Activated CD8-positive, alpha-beta T cell treated with anti-CD3 and anti-CD28 coated beads for 36 hours (primary cell): ENCODE measurements at regions of chr18 and their contacts with region 1.

Region 1: DNA sequence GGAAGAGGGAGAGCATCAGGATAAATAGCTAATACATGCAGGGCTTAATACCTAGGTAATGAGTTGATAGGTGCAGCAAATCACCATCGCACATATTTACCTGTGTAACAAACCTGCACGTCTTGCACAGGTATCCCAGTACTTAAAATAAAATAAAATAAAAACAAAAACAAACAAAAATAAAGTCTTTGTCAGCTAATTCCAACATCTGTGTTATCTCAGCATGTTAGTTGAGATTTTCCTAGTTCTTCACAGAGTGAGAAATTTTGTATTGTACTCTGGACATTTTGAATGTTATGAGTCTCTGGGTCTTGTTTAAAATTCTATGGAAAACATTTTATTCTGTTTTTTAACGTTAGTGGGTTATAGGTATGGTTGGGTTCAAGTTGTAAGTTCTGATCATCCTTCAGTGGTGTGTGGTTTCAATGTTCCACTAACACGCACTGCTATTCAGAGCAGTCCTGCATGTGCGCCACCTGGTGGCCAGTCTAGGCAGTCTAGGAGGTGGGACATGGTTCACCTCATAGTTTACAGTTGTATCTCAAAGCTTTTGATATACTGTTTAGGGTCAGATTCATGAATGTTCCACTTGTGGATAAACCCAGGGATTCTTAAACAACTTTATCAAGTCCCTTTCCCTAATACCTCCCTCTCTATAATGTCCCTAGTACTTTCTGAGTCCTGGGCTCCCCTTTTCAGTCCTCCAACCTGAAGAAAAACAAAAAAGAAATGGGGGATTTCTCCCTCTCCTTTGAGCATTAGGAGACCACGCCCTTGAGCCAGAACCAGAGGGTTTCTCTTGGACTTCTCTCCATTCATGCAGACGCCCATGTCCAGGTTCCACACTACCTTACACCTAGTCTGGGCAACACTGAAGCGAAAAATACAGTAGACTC is 213.4 kb upstream of the GATA6 start:
- DNase-seq: peak; percentile 84
- ATAC-seq: peak; percentile 84
- H3K4me3 Mint-ChIP-seq: no peak overlapping the region
- H3K27ac Mint-ChIP-seq: no peak overlapping the region
- H3K4me1 Mint-ChIP-seq: no peaks in the 10 kb centered on the region
- H3K27me3 Mint-ChIP-seq: peaks cover 12% of the 10 kb centered on the region
- CTCF ChIP-seq: peak; percentile 93

Region 2: DNA sequence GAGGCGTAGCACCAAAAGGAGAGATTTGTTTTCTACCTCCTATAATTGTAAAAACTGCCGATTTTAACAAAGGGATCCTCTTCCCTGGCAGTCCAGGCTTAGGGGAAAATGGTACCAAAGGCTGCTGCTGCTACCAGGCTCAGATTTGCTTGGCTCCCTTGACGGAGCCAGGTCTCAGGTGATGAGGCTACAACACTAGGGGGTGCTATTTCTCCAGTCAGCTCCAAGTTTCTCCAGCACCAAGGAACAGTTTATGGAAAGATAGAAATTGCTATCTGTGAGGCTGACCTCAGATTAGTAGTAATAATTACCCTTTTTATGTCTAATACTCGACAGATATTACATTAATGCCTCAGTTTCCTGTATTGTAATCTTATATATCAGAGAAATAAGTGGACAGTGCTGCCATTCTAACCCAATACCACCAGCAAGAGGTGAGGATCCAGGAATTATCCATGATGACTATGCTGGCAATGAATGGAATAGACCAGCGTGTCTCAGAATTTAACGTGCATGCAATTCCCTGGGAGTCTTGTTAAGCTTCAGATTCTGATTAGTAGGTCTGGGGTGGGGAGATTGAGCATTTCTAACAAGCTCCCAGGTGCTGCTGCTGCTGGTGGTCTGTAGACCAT is 466.8 kb before region 1 on chr18:
- CTCF ChIA-PET with region 1: interaction called, 9 read pairs
- POLR2A ChIA-PET with region 1: no interaction called
- intact Hi-C with region 1: loop called (anchors 5 kb)
- DNase-seq: peak; percentile 46
- ATAC-seq: peak; percentile 37
- H3K4me3 Mint-ChIP-seq: no peak overlapping the region
- H3K27ac Mint-ChIP-seq: no peak overlapping the region
- H3K4me1 Mint-ChIP-seq: peaks cover 1% of the 10 kb centered on the region
- H3K27me3 Mint-ChIP-seq: no peaks in the 10 kb centered on the region
- CTCF ChIP-seq: peak; percentile 90

Region 3: DNA sequence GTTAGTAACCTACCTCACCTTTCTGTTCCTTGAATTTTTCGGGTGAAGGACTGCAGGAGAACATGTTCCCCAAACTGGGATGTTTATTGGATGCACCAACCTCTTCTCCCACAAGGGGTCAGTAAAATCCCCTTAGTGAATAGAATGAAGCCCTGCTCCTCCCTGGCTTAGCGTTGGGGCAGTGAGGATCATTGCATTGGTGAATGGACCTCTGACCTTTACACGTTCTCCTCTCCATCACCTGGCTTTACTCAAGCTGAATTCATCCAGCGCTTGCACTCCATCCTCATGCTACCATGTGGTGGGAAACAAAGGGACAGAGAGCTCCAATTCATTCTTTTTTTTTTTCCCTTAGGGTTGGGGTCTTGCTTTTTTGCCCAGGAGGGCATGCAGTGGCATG is 58.2 kb before region 1 on chr18:
- CTCF ChIA-PET with region 1: interaction called, 7 read pairs
- POLR2A ChIA-PET with region 1: no interaction called
- intact Hi-C with region 1: loop called (anchors 10 kb)
- DNase-seq: peak; percentile 43
- ATAC-seq: peak; percentile 69
- H3K4me3 Mint-ChIP-seq: no peak overlapping the region
- H3K27ac Mint-ChIP-seq: no peak overlapping the region
- H3K4me1 Mint-ChIP-seq: peaks cover 3% of the 10 kb centered on the region
- H3K27me3 Mint-ChIP-seq: peaks cover 9% of the 10 kb centered on the region
- CTCF ChIP-seq: peak; percentile 69